Activated B cell treated with CpG ODN at 0.5 μM for 24 hours (primary cell): ENCODE measurements at regions of chr1 and their contacts with region 1.

Region 1: DNA sequence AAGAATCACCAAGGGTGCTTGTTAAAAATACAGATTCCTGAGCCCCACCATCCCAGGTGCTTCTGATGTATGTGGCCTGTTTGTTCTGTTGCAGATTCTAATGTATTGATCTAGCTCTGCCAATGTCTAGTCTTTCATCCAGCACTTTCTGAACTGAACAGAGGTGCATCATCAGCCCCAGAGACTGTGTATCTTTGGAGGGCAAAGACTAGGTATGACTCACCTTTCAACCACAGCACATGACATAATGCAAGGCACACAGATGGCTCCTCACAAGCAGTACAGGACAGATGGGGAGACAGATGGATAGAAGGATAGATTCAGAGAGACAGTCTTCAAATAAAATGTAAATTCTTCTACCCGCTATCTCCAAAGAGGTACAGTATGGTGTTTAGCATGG is 32.3 kb downstream of the CD58 start:
- DNase-seq: no peak
- ATAC-seq: peak; percentile 80
- H3K4me3 Mint-ChIP-seq: peak overlapping the region; percentile 20
- H3K27ac Mint-ChIP-seq: peak overlapping the region; percentile 86
- H3K4me1 Mint-ChIP-seq: peaks cover 66% of the 10 kb centered on the region
- H3K27me3 Mint-ChIP-seq: no peaks in the 10 kb centered on the region
- CTCF ChIP-seq: no peak

Region 2: GRCh38 chr1:116514708-116515525 is 23.6 kb before region 1 on chr1:
- CTCF ChIA-PET with region 1: no interaction called
- POLR2A ChIA-PET with region 1: interaction called, 11 read pairs
- intact Hi-C with region 1: no loop called
- DNase-seq: no peak
- ATAC-seq: peak; percentile 76
- H3K4me3 Mint-ChIP-seq: peak overlapping the region; percentile 56
- H3K27ac Mint-ChIP-seq: peak overlapping the region; percentile 92
- H3K4me1 Mint-ChIP-seq: peaks cover 59% of the 10 kb centered on the region
- H3K27me3 Mint-ChIP-seq: no peaks in the 10 kb centered on the region
- CTCF ChIP-seq: no peak

Region 3: GRCh38 chr1:116743535-116743934 is 205.0 kb after region 1 on chr1:
- CTCF ChIA-PET with region 1: no interaction called
- POLR2A ChIA-PET with region 1: no interaction called
- intact Hi-C with region 1: no loop called
- DNase-seq: no peak
- ATAC-seq: no peak
- H3K4me3 Mint-ChIP-seq: no peak overlapping the region
- H3K27ac Mint-ChIP-seq: no peak overlapping the region
- H3K4me1 Mint-ChIP-seq: peaks cover 9% of the 10 kb centered on the region
- H3K27me3 Mint-ChIP-seq: no peaks in the 10 kb centered on the region
- CTCF ChIP-seq: no peak